ENCODE measurements at regions of chr7 and their contacts with region 1.

Region 1: GRCh38 chr7:26200444-26201246 is at the start of gene HNRNPA2B1:
- H3K4me3 ChIP-seq: peak within 1 kb of the TSS; percentile 100
- H3K27ac ChIP-seq: peak within 1 kb of the TSS; percentile 100
- H3K4me1 ChIP-seq: peaks cover 11% of the 10 kb centered on the region; the same call in 1 of the 2 replicates
- CTCF ChIP-seq: no peak; the same call in 1 of the 2 replicates

Region 2: GRCh38 chr7:25862260-25863037 is 338.2 kb before region 1 on chr7:
- CTCF ChIA-PET with region 1: interaction called, 4 read pairs
- POLR2A ChIA-PET with region 1: interaction called, 12 read pairs
- H3K4me3 ChIP-seq: no peak overlapping the region
- H3K27ac ChIP-seq: peak overlapping the region; percentile 59
- H3K4me1 ChIP-seq: peaks cover 22% of the 10 kb centered on the region
- CTCF ChIP-seq: no peak

Region 3: DNA sequence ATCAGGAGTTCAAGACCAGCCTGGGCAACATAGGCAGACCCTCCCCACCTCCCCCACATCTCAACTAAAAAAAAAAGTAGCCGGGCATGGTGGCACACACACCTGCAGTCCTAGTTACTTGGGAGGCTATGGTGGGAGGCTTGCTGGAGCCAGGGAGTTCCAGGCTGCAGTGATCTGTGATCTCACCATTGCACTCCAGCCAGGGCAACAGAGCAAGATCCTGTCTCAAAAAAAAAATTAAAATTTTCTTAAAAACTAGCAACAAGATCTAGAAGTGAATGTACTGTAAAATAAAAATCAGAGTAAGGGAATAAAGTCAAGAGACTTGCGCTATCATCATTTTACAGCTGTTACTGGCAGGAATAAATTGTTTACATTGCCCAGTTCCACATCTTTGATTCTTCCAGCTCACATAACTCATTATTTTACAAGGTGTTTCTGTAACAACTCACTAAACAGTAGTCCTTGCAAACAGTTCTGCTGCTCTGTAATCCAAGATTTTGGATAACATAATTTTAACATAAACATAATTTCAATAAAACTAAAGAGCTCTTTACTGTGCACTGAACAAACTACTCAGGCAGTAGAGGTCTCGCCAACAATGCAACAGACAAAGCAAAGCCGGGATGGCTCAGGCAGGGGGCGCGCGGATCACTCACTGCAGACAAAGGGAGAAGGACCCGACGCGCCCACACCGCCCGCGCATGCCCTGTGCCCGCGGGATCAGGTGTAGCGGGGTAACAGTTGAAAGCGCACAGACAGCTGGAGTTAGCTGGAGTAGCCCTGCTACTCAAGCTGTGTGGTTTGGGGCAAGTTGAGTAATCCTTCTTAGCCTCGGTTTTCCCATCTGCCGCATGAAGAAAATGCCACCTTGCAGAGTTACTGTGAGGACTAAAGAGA is 122.0 kb before region 1 on chr7:
- CTCF ChIA-PET with region 1: interaction called, 10 read pairs
- POLR2A ChIA-PET with region 1: interaction called, 5 read pairs
- H3K4me3 ChIP-seq: peak overlapping the region; percentile 19; the same call in 1 of the 2 replicates
- H3K27ac ChIP-seq: no peak overlapping the region
- H3K4me1 ChIP-seq: peaks cover 23% of the 10 kb centered on the region
- CTCF ChIP-seq: peak; percentile 49; the same call in 1 of the 2 replicates

Region 4: DNA sequence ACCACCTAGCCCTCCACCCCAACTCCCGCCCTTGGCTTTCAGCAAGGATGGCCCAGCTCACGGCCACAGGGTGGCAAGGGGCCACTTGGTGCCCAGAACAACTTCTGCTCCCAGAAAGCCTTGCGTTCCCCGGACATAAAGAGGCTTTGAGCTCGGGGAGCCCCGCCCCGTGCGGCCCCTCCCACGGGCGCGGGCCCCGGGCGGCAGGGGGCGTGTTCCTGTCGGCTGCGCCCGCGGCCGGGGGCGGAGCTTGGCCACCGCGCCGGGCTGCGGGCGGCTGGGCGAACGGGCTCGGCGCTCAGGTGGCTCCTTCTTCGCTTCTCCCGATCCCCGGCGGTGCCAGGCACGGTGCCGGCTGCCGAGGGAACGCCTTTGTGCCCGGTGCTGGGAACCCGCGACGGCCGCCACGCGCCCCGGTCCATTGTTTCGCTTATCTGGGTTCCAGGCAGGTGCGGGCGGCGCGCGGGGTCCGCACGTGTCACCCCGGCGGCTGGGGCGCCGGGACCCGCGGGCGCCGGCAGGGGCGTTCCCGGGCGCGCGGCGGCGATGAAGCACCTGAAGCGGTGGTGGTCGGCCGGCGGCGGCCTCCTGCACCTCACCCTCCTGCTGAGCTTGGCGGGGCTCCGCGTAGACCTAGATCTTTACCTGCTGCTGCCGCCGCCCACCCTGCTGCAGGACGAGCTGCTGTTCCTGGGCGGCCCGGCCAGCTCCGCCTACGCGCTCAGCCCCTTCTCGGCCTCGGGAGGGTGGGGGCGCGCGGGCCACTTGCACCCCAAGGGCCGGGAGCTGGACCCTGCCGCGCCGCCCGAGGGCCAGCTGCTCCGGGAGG is 48.5 kb before region 1 on chr7 and contains the start of gene NFE2L3:
- CTCF ChIA-PET with region 1: interaction called, 4 read pairs
- POLR2A ChIA-PET with region 1: interaction called, 17 read pairs
- H3K4me3 ChIP-seq: peak within 1 kb of the TSS; percentile 71
- H3K27ac ChIP-seq: peak within 1 kb of the TSS; percentile 71; the same call in 1 of the 2 replicates
- H3K4me1 ChIP-seq: peaks cover 4% of the 10 kb centered on the region; the same call in 1 of the 2 replicates
- CTCF ChIP-seq: peak; percentile 46; the same call in 1 of the 2 replicates

Region 5: DNA sequence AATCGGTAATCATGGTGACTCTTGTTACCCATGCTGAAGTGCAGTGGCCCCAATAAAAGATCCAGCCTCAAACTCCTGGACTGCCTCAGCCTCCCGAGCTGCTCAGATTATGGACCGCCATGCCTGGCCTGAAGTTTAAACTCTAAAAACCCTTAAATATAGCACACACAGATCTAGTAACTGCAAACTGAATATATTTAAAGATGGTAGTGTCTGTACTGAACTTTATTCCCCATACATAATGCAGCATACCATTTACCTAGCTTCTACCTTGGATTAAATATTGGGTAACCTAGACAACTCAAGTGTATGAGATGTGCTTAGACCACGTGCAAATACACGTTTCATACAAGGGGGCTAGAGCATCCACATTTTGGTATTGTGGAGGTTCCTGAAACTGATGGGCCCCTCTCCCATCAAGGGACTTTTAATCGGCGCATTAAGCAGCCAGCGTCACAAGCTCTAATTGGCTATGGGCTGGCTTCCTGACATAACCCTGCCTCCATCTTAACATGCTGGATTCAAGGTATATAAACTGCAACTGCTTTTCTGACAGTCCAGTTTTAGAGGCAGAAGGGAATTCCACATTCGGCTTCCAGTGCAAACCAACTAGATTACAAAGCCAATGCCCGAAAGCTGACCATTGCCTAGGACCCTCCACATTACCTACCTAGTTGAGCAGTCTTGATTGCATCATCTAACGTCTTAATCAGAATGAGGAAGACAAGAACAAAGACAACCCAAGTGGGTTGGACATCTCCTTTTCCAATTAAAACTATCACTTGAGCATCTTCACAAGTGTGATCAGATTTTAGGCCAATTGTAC is 13.1 kb before region 1 on chr7:
- CTCF ChIA-PET with region 1: interaction called, 10 read pairs
- POLR2A ChIA-PET with region 1: interaction called, 56 read pairs
- H3K4me3 ChIP-seq: no peak overlapping the region
- H3K27ac ChIP-seq: no peak overlapping the region
- H3K4me1 ChIP-seq: no peaks in the 10 kb centered on the region; the same call in 1 of the 2 replicates
- CTCF ChIP-seq: no peak

Region 6: DNA sequence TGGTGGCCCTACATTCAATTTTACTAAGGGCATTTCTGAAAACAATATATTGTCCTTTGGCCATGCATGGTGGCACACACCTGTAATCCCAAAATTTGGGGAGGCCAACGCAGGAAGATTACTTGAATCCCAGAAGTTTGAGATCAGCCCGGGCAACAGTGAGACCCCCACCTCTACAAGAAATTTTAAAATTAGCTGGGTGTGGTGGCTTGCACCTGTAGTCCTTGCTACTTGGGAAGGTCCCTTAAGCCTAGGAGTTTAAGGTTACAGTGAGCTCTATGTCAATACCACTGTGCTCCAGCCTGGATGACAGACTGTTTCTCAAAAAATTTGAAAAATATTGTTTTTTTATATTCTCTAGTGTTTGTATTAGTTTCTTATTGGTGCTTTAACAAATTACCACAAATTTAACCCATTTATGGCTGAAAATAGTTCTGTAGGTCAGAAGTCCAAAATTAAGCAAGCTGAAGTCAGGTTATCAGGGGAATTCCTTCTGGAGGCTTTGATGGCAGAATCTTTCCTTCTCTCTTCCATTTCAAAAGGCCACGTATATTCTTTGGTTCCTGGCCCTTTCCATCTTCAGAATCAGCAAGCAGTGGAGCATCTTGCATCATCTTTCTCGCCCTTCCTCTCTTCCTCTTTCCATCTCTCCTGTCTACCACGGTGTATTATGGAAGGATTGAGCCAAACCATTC is 13.3 kb after region 1 on chr7:
- CTCF ChIA-PET with region 1: interaction called, 3 read pairs
- POLR2A ChIA-PET with region 1: interaction called, 13 read pairs
- H3K4me3 ChIP-seq: no peak overlapping the region
- H3K27ac ChIP-seq: no peak overlapping the region
- H3K4me1 ChIP-seq: no peaks in the 10 kb centered on the region
- CTCF ChIP-seq: no peak

Region 7: DNA sequence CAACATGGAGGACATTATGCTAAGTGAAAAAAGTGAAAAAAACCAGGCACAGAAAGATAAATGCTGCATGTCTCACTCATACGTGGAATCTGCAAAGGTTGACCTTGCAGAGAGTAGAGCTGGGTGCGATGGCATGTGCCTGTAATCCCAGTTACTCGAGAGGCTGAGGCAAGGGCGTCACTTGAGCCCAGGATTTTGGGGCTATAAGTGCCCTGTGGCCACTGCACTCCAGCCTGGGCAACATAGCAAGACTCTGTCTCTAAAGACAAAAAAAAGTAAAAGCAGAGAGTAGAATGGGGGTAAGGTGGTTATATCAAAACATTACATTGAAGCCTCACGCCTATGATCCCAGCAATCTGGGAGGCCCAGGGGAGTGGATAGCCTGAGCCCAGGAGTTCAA is 23.7 kb after region 1 on chr7:
- CTCF ChIA-PET with region 1: no interaction called
- POLR2A ChIA-PET with region 1: no interaction called
- H3K4me3 ChIP-seq: no peak overlapping the region
- H3K27ac ChIP-seq: no peak overlapping the region
- H3K4me1 ChIP-seq: no peaks in the 10 kb centered on the region
- CTCF ChIP-seq: no peak

Region 8: DNA sequence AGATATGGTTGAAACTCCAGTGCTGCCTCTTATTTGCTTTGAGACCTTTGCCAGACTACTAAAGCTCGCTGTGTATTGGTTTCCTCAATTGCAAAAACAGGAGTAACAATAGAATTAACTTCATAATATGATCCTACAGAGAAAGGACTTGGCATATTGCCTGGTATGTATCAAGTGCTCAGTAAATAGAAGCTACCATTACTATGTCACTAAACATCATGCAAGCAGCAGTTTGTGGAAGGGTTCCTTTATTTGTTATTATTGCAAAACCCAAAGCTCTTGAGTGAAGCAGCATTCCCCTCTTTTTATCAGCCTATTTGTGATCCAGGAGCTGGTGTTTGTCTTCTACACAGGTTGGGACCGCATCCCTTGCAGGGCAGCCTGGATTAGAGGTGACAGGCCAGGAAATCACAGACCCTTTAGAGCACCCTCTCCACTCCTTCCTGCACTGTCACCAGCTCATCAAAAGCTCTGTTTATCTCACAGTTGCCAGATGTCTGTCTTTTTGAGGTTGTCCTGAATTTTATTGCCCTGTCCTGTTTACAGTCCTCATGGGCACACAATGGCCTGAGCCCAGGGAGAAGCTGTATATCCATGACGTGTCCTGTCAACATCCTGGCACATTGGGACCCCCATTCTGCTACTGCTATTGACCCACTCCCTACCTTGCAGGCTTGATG is 212.5 kb after region 1 on chr7:
- CTCF ChIA-PET with region 1: no interaction called
- POLR2A ChIA-PET with region 1: no interaction called
- H3K4me3 ChIP-seq: no peak overlapping the region
- H3K27ac ChIP-seq: no peak overlapping the region; the same call in 1 of the 2 replicates
- H3K4me1 ChIP-seq: peaks cover 10% of the 10 kb centered on the region
- CTCF ChIP-seq: no peak

Measured in HEK293 (cell line).